Activated CD8-positive, alpha-beta T cell treated with anti-CD3 and anti-CD28 coated beads, Interleukin-2, amount 10 ng/mL, durations not matched to agents 7 days and 5 days (primary cell): ENCODE measurements at regions of chr19 and their contacts with region 1.

Region 1: GRCh38 chr19:35140962-35141637 is 2.0 kb upstream of the FXYD7 start:
- DNase-seq: peak; percentile 97
- ATAC-seq: peak; percentile 90
- H3K4me3 Mint-ChIP-seq: peak overlapping the region; percentile 77
- H3K27ac Mint-ChIP-seq: peak overlapping the region; percentile 81
- H3K4me1 Mint-ChIP-seq: peaks cover 36% of the 10 kb centered on the region
- H3K27me3 Mint-ChIP-seq: peaks cover 33% of the 10 kb centered on the region

Region 2: GRCh38 chr19:35044317-35045117 is 96.6 kb before region 1 on chr19:
- CTCF ChIA-PET with region 1: interaction called, 12 read pairs
- POLR2A ChIA-PET with region 1: no interaction called
- DNase-seq: peak; percentile 71
- ATAC-seq: no peak
- H3K4me3 Mint-ChIP-seq: no peak overlapping the region
- H3K27ac Mint-ChIP-seq: no peak overlapping the region
- H3K4me1 Mint-ChIP-seq: peaks cover 27% of the 10 kb centered on the region
- H3K27me3 Mint-ChIP-seq: peaks cover 10% of the 10 kb centered on the region

Region 3: GRCh38 chr19:35098413-35099049 is 42.6 kb before region 1 on chr19:
- CTCF ChIA-PET with region 1: no interaction called
- POLR2A ChIA-PET with region 1: no interaction called
- DNase-seq: no peak
- ATAC-seq: no peak
- H3K4me3 Mint-ChIP-seq: no peak overlapping the region
- H3K27ac Mint-ChIP-seq: no peak overlapping the region
- H3K4me1 Mint-ChIP-seq: no peaks in the 10 kb centered on the region
- H3K27me3 Mint-ChIP-seq: no peaks in the 10 kb centered on the region

Region 4: GRCh38 chr19:35154525-35155406 is 13.7 kb after region 1 on chr19 and contains the start of gene FXYD5:
- CTCF ChIA-PET with region 1: interaction called, 67 read pairs
- POLR2A ChIA-PET with region 1: interaction called, 8 read pairs
- DNase-seq: peak; percentile 77
- ATAC-seq: peak; percentile 77
- H3K4me3 Mint-ChIP-seq: peak within 1 kb of the TSS; percentile 97
- H3K27ac Mint-ChIP-seq: peak within 1 kb of the TSS; percentile 96
- H3K4me1 Mint-ChIP-seq: peaks cover 51% of the 10 kb centered on the region
- H3K27me3 Mint-ChIP-seq: peaks cover 7% of the 10 kb centered on the region
- total RNA-seq, gene FXYD5: 338 to 384 TPM

Region 5: DNA sequence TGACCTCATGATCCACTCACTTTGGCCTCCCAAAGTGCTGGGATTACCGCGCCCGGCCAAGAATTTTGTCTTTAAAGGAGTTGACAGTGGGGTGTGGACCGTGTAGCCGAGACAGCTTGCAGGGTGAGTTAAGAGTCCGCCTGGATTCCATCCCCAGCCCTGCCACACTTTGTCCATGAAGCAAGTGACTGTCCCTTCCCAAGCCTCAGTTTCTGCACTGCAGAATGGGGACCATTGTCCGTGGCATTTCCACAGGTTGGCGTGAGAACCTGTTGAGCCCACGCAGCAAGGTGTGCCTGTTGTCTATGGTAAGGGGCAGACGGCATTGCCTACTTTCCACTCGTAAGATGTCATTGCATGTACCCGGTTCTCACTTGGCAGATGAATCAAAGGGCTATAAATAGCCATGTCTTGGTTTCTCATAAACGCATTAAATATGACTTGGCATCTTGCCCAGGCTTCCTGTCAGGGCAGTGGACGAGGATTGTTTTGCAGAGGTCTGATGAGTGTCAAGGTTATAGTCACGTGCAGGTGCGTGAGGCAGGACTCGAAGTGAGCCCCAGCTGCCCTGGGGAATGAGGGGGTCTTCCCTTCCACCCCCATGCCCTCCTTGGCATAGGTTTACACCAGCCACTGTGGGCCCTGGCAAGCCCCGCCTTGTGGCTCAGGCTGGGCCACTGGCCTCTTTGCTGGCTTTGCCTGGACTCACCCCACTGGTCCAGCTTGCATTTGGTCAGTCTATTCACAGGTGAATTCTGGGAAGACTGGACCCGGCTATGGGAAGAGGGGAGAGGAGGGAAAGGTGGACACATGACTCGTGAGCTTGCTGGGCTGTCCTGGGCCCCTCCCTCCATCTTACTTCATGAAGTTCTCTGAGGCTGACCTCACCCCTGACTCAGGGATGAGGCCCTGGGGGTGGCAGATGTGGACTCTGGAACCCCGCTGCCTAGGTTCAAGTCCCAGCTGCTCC is 72.8 kb after region 1 on chr19:
- CTCF ChIA-PET with region 1: interaction called, 64 read pairs
- POLR2A ChIA-PET with region 1: interaction called, 3 read pairs
- DNase-seq: peak; percentile 82
- ATAC-seq: peak; percentile 34
- H3K4me3 Mint-ChIP-seq: peak overlapping the region; percentile 22
- H3K27ac Mint-ChIP-seq: peak overlapping the region; percentile 95
- H3K4me1 Mint-ChIP-seq: peaks cover 77% of the 10 kb centered on the region
- H3K27me3 Mint-ChIP-seq: no peaks in the 10 kb centered on the region

Region 6: DNA sequence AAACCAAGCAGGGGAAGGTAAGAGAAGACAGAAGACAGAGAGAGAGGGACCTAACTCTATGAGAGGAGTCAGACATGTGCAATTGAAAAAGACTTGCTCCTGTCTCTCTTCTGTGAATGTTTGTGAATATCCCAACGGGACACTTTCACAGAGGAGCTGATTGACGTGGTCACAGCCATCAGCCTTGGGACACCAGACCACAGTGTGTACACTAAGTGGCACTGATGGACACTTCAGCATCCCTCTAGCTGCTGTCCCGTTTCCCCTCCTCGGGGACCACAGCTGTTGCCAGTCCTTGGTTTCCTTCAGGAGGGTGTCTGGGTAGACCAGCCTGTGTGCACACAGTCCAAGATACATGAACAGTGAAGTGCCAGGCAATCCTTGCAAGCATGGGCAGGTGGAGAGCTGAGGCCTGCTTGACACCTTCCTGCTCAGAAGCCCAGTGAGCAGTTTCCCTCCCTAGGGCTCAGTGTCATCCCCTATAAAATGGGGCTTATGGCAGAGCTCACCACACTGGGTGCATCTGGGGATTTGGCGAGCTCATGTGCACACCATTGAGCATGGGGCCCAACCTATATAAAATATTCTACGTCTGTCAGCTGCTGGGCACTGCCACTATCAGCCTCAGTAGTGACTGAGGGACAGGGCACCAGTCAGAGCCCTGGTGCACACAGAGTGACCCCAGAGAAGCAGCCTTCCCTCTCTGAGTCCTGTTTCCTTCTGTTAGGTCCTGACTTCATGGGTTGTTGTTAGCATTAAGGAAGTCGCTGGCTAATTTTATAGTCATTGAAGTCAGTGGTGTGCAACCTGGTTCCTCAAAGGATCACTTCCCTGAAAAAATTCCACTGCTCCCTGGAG is 123.4 kb after region 1 on chr19:
- CTCF ChIA-PET with region 1: interaction called, 11 read pairs
- POLR2A ChIA-PET with region 1: interaction called, 3 read pairs
- DNase-seq: no peak
- ATAC-seq: no peak
- H3K4me3 Mint-ChIP-seq: no peak overlapping the region
- H3K27ac Mint-ChIP-seq: no peak overlapping the region
- H3K4me1 Mint-ChIP-seq: peaks cover 21% of the 10 kb centered on the region
- H3K27me3 Mint-ChIP-seq: no peaks in the 10 kb centered on the region